CD8-positive, alpha-beta memory T cell (primary cell): ENCODE measurements at regions of chr14 and their contacts with region 1.

Region 1: GRCh38 chr14:102304611-102305509 is at the start of gene MOK:
- DNase-seq: peak; percentile 92 to 99 (median 98)
- H3K4me3 ChIP-seq: peak within 1 kb of the TSS; percentile 86
- H3K4me3 Mint-ChIP-seq: peak within 1 kb of the TSS; percentile 88 to 98 (median 93)
- H3K27ac ChIP-seq: peak within 1 kb of the TSS; percentile 81
- H3K27ac Mint-ChIP-seq: peak within 1 kb of the TSS; percentile 93 to 100 (median 98)
- H3K4me1 ChIP-seq: peaks cover 6% of the 10 kb centered on the region
- H3K4me1 Mint-ChIP-seq: peaks cover 10 to 15% (median 12%) of the 10 kb centered on the region in 3 donors
- H3K27me3 ChIP-seq: no peaks in the 10 kb centered on the region
- H3K27me3 Mint-ChIP-seq: peaks cover 4% of the 10 kb centered on the region in 2 donors
- total RNA-seq, gene MOK: 5.8 to 7.3 TPM

Region 2: GRCh38 chr14:102103062-102103695 is 201.7 kb before region 1 on chr14:
- CTCF ChIA-PET with region 1: no interaction called
- POLR2A ChIA-PET with region 1: interaction called, 11 read pairs
- DNase-seq: no peak
- H3K4me3 ChIP-seq: no peak overlapping the region
- H3K4me3 Mint-ChIP-seq: no peak overlapping the region
- H3K27ac ChIP-seq: no peak overlapping the region
- H3K27ac Mint-ChIP-seq: no peak overlapping the region
- H3K4me1 ChIP-seq: no peaks in the 10 kb centered on the region
- H3K4me1 Mint-ChIP-seq: no peaks in the 10 kb centered on the region
- H3K27me3 ChIP-seq: no peaks in the 10 kb centered on the region
- H3K27me3 Mint-ChIP-seq: peaks cover 0 to 2% of the 10 kb centered on the region in 2 donors

Region 3: DNA sequence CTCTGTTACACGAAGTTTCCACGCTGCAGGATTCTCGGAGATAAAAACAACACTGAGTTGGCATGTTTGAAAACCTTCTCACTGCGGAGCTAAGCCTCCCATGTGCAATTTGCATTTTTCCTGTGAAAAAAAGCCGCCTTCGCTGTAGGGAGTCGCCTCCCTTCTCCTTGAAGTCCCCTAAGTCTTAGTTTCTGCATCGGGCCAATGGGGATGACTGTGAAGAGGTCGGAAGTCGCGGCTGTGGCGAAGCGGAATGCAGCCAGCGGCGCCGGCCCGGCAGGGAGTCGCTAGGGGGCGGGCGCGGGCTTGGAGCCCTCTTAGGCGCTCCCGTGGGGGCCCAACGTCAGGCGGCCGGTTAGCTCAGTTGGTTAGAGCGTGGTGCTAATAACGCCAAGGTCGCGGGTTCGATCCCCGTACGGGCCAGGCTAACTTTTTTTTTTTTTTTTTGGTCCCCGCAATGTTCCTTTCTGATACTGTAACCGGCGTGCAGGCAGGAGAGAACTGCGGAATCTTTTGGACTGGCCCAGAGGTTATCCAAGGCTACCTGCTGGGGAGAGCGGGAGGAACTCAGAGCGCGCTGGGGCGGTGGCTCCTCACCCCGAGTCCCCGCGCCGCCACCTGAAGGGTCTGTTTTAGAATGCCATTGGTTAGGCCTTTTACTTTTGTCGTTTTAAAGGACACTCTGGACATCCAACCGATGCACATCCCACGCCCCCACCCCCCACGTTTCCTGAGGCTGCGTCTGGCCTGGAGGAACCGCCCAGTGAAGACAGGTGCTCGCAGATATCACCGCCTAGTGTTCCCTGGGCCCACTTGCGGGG is 12.1 kb after region 1 on chr14:
- CTCF ChIA-PET with region 1: interaction called, 79 read pairs
- POLR2A ChIA-PET with region 1: interaction called, 15 read pairs
- DNase-seq: peak; percentile 92 to 97 (median 94)
- H3K4me3 ChIP-seq: peak overlapping the region; percentile 49
- H3K4me3 Mint-ChIP-seq: peak overlapping the region; percentile 94 to 99 (median 96)
- H3K27ac ChIP-seq: peak overlapping the region; percentile 36
- H3K27ac Mint-ChIP-seq: peak overlapping the region; percentile 93 to 99 (median 98)
- H3K4me1 ChIP-seq: peaks cover 39% of the 10 kb centered on the region
- H3K4me1 Mint-ChIP-seq: peaks cover 38 to 72% (median 64%) of the 10 kb centered on the region in 3 donors
- H3K27me3 ChIP-seq: no peaks in the 10 kb centered on the region
- H3K27me3 Mint-ChIP-seq: peaks cover 0 to 8% of the 10 kb centered on the region in 2 donors